ENCODE measurements at regions of chr5 and their contacts with region 1.

Region 1: DNA sequence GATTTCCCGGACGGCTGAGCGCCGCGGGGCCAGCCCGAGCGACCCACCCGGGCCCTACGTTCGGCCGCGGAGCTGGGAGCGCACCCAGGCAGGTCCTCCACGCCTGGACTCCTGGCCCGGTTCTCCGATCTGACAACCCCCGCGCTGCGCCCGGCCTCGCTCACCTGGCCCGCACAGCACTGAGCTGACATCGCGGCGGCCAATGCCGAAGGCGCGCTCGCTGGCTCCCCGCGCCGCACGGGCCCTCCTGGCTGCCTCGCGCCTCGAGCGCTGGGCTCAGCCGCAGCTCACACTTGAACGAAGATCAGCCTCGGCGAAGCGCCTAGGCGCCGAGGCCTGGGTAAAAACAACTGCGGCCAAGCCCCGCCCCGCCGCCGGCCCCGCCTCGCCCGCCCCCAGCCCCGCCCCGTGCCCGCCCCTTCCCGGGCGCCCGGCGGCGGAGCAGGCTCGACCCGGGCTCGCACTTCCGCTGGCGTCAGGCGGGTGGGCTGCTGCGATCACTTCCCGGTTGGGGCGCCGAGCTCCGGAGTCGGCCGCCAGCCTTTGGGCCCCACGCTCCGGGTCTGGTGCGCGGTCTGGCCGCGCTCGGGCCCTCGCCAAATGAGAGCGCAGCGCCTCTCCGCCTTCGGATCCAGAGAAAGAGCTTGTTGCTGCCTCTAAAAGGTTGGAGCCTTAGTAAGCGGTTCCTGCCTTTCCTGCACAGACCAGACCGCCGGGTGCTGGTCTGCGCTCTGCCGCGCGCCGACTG is at the start of gene SERINC5:
- DNase-seq: peak; percentile 95
- total RNA-seq, gene SERINC5: 20.9 TPM

Region 2: GRCh38 chr5:80008995-80009765 is 246.7 kb before region 1 on chr5:
- intact Hi-C with region 1: no loop called
- DNase-seq: no peak

Region 3: GRCh38 chr5:80093796-80094195 is 162.1 kb before region 1 on chr5:
- intact Hi-C with region 1: loop called (anchors 5 kb)
- DNase-seq: peak; percentile 7

Region 4: GRCh38 chr5:80141147-80141671 is 114.7 kb before region 1 on chr5:
- intact Hi-C with region 1: loop called (anchors 5 kb)
- DNase-seq: peak; percentile 87

Region 5: GRCh38 chr5:80191991-80192398 is 63.9 kb before region 1 on chr5:
- intact Hi-C with region 1: loop called (anchors 2 kb)
- DNase-seq: no peak

Region 6: GRCh38 chr5:80216753-80217596 is 38.9 kb before region 1 on chr5:
- intact Hi-C with region 1: loop called (anchors 2 kb)
- DNase-seq: peak; percentile 89

Region 7: DNA sequence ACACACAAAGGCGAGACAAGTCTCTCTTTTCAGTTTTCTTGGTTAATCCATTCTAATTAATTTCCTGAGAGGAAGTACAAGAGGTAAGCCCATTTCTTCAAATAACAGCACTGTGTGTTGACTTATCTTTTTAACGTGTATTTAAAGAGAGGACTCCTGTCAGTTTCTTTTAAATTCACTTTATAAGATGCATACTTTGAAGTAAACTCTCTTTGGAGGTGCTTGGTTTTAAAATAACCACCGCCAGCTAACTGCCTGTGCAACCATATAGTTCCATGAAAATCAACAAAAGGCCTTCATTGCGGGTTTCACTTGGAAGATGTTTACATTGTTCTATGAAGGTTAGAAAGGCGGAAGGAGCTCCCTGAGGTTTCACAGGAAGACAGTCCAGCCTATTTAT is 13.0 kb after region 1 on chr5:
- intact Hi-C with region 1: no loop called
- DNase-seq: no peak

Region 8: DNA sequence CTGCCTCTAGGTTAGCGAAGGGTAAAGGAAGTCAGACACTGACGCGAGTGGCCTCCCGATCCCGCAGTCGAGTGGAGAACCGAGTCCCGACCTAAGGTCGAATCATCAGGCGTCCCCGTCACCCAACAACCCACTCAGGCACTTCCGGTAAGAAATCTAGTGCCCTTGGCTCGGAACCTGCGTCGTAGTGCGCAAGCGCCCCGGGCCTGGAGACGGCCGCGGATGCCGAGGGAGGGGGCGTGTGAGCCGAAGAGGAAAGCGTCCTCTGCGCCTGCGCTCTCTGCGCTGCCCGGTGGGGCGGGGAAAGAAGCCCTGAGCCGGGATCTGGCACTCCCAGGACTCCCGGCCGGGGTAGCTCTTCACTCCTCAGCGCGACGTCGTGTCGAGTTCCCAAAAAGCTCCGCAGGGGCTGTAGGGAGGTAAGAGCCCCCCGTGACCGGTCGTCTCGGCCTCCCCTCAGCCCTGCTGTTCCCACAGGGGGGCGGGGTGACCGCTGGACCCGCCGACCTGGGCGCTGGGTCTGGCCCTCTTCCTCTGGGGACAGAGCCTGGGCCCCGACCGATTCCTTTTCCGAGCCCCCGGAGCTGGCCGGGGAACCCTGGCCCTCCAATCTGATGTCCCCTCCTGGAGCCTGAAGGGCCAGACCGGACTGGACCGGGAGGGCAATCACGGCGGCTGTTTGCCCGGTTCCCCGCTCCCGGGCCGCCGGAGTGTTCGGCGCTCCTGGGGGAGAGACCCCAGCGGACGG is 152.0 kb after region 1 on chr5 and contains the start of gene ZFYVE16:
- intact Hi-C with region 1: loop called (anchors 5 kb)
- DNase-seq: peak; percentile 99
- total RNA-seq, gene ZFYVE16: 50.3 TPM